A673 (cell line): ENCODE measurements at regions of chr21 and their contacts with region 1.

Region 1: GRCh38 chr21:32770871-32771523 is 558 bp downstream of the PAXBP1 start:
- DNase-seq: peak; percentile 56
- H3K4me3 ChIP-seq: peak overlapping the region; percentile 98
- H3K27ac ChIP-seq: peak overlapping the region; percentile 97
- H3K4me1 ChIP-seq: peaks cover 17% of the 10 kb centered on the region
- H3K27me3 ChIP-seq: no peaks in the 10 kb centered on the region
- CTCF ChIP-seq: no peak

Region 2: DNA sequence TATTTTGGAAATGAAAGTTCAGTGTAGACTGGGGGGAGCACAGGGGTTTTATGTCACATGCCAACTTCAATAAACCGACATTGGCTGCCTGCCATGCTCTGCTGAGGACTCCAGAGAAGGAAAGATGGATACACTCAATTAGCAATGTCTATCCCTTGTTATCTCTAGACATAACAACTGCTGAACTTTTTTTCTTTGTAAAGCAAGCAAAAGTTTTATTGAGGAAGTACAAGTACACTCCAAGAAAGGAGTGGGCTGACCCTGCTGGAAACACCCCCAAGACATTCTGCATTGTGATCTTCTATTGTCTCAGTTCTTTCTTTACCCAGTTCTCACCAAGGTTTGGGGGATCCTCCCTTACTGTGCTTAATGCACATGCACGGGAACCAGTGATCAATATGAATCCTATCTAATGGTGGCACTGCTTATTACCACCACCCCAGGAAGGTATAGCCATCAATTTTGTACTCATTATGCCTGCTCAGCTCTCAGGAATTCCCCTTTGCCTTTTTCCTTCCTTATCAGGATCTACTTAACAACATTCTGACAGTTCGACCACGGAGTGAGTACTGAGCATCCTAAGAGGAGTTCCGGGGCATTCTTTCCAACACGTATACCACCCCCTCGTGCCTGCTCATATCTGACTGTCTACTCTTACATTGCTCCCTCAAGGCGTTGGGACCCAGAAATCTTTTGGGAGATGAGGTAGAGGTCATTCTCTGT is 71.9 kb before region 1 on chr21:
- CTCF ChIA-PET with region 1: no interaction called
- POLR2A ChIA-PET with region 1: interaction called, 10 read pairs
- intact Hi-C with region 1: no loop called
- DNase-seq: peak; percentile 44
- H3K4me3 ChIP-seq: no peak overlapping the region
- H3K27ac ChIP-seq: no peak overlapping the region
- H3K4me1 ChIP-seq: peaks cover 12% of the 10 kb centered on the region
- H3K27me3 ChIP-seq: no peaks in the 10 kb centered on the region
- CTCF ChIP-seq: no peak

Region 3: DNA sequence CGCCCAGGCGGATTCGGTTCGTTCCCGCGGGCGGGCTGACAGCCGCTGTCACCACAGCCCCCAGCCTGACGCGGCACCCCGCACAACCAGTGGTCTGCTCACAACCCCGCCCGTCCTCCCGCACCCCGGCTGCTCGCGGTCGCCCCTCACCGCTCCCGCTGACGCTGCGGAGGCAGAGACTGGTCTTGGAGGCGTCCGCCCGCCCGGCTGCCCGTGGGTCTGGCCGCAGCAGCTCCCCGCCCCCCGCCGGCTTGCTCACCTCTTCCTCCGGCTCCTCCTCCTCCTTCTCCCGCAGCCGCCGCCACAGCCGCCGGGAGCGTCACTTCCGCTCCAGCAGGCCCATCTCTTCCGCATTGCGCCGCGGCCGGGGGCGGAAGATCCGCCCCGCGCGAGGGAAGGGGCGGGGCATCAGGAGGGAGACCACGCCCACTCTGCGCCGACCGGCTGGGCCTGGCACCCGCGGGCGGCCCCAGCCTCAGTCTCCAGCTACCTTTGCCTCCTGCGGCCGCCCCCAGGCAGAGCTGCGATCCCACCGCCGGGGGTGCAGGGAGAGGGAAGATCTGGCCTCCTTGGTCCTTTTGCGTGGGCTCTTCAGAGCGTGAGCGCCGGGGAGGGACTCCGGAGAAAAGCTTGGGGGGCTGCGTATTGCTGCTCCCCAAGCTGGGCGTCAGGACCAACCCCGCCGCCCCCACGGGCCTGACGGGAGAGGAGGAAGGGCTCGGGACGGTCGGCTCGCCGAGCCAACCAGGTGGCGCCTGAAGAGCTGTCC is 43.1 kb before region 1 on chr21 and contains the start of gene SYNJ1:
- CTCF ChIA-PET with region 1: interaction called, 14 read pairs
- POLR2A ChIA-PET with region 1: no interaction called
- intact Hi-C with region 1: loop called (anchors 5 kb)
- DNase-seq: peak; percentile 95
- H3K4me3 ChIP-seq: peak within 1 kb of the TSS; percentile 83
- H3K27ac ChIP-seq: peak within 1 kb of the TSS; percentile 87
- H3K4me1 ChIP-seq: peaks cover 10% of the 10 kb centered on the region
- H3K27me3 ChIP-seq: no peaks in the 10 kb centered on the region
- CTCF ChIP-seq: no peak
- total RNA-seq, gene SYNJ1: 16.9 and 17.1 TPM in 2 replicates

Region 4: DNA sequence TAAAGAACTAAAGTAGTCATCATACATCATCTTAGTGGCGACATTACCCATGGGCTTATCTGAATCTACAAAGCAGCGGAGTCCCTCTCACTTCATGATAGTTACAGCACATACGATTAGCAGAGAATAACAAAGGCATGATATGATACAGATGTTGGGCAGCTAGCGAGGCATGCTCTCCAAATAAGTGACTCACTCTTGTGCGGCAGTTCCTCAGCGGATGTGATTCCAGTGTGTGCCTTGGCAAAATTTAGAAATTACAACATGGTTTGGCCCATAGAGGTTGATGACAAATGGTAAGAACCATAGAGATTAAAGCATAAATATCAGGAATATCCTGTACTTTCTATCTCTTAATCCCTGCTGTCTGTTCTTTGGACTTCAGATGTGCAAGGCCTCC is 48.7 kb after region 1 on chr21:
- CTCF ChIA-PET with region 1: interaction called, 6 read pairs
- POLR2A ChIA-PET with region 1: interaction called, 13 read pairs
- intact Hi-C with region 1: no loop called
- DNase-seq: no peak
- H3K4me3 ChIP-seq: no peak overlapping the region
- H3K27ac ChIP-seq: no peak overlapping the region
- H3K4me1 ChIP-seq: no peaks in the 10 kb centered on the region
- H3K27me3 ChIP-seq: no peaks in the 10 kb centered on the region
- CTCF ChIP-seq: no peak

Region 5: GRCh38 chr21:32826329-32827167 is 55.6 kb after region 1 on chr21:
- CTCF ChIA-PET with region 1: interaction called, 6 read pairs
- POLR2A ChIA-PET with region 1: interaction called, 12 read pairs
- intact Hi-C with region 1: no loop called
- DNase-seq: peak; percentile 72
- H3K4me3 ChIP-seq: no peak overlapping the region
- H3K27ac ChIP-seq: no peak overlapping the region
- H3K4me1 ChIP-seq: no peaks in the 10 kb centered on the region
- H3K27me3 ChIP-seq: peaks cover 3% of the 10 kb centered on the region
- CTCF ChIP-seq: peak; percentile 67

Region 6: GRCh38 chr21:33542640-33543504 is 771.9 kb after region 1 on chr21 and contains the start of gene SON:
- CTCF ChIA-PET with region 1: no interaction called
- POLR2A ChIA-PET with region 1: interaction called, 13 read pairs
- intact Hi-C with region 1: no loop called
- DNase-seq: peak; percentile 100
- H3K4me3 ChIP-seq: peak within 1 kb of the TSS; percentile 59
- H3K27ac ChIP-seq: peak within 1 kb of the TSS; percentile 98
- H3K4me1 ChIP-seq: peaks cover 20% of the 10 kb centered on the region
- H3K27me3 ChIP-seq: no peaks in the 10 kb centered on the region
- CTCF ChIP-seq: no peak
- total RNA-seq, gene SON: 322 and 328 TPM in 2 replicates